CD4-positive, alpha-beta T cell (primary cell): ENCODE measurements at regions of chr19 and their contacts with region 1.

Region 1: DNA sequence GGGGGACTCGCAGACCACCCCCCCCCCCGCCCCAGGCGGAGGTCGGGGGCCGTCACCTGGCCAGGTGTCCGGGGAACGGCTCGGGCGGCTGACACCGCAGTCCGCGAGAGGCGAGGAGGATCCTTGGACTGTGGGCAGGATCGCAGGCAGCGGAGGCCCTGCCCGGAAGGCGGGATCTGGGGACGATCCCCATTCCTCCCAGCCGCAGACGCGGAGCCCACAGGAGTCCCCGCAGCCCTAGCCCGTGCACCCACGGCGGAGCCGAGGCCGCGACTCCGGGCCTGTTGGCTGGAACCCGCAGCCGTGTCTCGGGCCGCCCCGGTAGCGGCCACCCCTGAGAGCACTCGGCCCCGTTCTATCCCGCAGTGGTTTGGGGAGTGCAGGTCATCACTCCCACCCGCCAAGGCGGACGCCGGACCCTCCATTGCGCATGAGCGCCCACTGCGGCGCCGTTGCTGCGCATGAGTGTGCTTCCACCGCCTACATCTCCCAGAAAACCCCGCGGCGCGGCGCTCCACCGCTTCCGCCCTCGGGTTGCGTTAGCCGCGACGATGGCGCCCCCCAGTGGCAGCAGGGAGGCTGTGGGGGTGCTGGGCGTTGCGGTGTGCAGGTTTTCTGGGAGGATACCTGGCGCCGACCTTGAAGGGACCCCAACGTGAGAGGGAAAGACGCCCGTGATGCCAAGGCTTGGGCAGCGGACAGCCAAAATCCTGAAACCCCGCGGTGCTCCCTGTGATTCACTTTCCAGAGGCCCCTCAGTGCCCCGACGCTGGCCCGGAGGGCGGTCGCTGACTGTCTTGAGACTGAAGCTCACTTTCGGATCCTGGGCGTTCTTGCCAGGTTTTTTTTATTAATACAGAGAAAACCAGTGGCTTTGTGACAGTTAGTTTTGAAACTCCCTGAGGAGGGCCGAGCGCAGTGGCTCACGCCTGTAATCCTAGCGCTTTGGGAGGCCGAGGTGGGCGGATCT is 4.4 kb upstream of the ZNF329 start:
- DNase-seq: peak; percentile 93 to 100 (median 97)
- ATAC-seq: peak; percentile 91
- H3K4me3 ChIP-seq: peak overlapping the region; percentile 76
- H3K4me3 Mint-ChIP-seq: peak overlapping the region; percentile 93
- H3K27ac ChIP-seq: peak overlapping the region; percentile 52 to 62
- H3K27ac Mint-ChIP-seq: peak overlapping the region; percentile 78
- H3K4me1 ChIP-seq: peaks cover 31% of the 10 kb centered on the region
- H3K4me1 Mint-ChIP-seq: peaks cover 23% of the 10 kb centered on the region
- H3K27me3 ChIP-seq: no peaks in the 10 kb centered on the region
- H3K27me3 Mint-ChIP-seq: no peaks in the 10 kb centered on the region
- CTCF ChIP-seq: peak; percentile 97

Region 2: GRCh38 chr19:56314562-56315077 is 1840.3 kb before region 1 on chr19 and contains the start of gene ZSCAN5A:
- CTCF ChIA-PET with region 1: no interaction called
- POLR2A ChIA-PET with region 1: no interaction called
- intact Hi-C with region 1: loop called in 1 of 2 experiments (anchors 10 kb)
- DNase-seq: peak; percentile 93 to 99 (median 96)
- ATAC-seq: peak; percentile 76
- H3K4me3 ChIP-seq: peak within 1 kb of the TSS; percentile 76
- H3K4me3 Mint-ChIP-seq: peak within 1 kb of the TSS; percentile 91
- H3K27ac ChIP-seq: peak within 1 kb of the TSS; percentile 93 to 99
- H3K27ac Mint-ChIP-seq: peak within 1 kb of the TSS; percentile 95
- H3K4me1 ChIP-seq: peaks cover 14% of the 10 kb centered on the region
- H3K4me1 Mint-ChIP-seq: peaks cover 34% of the 10 kb centered on the region
- H3K27me3 ChIP-seq: no peaks in the 10 kb centered on the region
- H3K27me3 Mint-ChIP-seq: no peaks in the 10 kb centered on the region
- CTCF ChIP-seq: no peak
- total RNA-seq, gene ZSCAN5A: 3.3 to 4.4 TPM

Region 3: DNA sequence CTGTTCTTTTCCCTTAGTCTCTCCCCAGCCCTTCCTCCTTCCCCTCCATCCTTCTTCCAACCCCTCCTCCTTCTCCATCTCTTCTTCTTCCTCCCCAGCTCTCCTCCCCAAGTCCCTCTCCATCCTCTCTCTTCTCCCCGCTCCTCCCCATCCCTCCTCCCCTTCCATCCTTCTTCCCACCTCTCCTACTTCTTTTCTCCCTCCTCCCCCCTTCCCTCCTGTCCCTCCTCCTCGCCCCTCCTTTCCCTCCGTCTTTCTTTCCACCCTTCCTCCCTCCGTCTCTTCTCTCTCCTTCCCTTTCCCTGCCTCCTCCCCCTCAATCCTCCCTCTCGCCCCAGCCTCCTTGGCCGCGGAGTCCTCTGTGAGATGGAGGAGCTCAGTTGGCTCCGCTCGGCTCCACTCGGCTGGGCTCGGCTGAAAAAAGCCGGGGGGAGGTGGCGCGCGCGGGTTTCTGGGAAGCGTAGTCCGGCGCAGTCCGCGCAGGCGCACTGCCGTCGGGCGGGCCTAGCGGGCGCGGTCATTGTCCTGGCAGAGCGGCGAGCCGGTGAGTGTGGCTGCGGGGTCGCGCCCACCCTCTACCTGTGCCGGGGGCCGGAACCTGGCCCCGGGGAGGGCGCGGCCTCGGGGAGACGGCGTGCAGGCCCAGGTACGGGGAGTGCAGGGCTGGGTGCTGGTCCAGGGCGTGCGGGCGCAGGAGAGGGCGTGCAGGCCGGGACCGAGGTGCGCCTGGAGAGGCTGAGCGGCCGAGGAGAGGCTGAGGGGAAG is 1560.0 kb before region 1 on chr19 and contains the start of gene ZNF71:
- CTCF ChIA-PET with region 1: no interaction called
- POLR2A ChIA-PET with region 1: no interaction called
- intact Hi-C with region 1: loop called in 1 of 2 experiments (anchors 10 kb)
- DNase-seq: peak; percentile 79 to 90 (median 84)
- ATAC-seq: peak; percentile 95
- H3K4me3 ChIP-seq: peak within 1 kb of the TSS; percentile 73
- H3K4me3 Mint-ChIP-seq: peak within 1 kb of the TSS; percentile 92
- H3K27ac ChIP-seq: peak within 1 kb of the TSS; percentile 43 to 62
- H3K27ac Mint-ChIP-seq: peak within 1 kb of the TSS; percentile 79
- H3K4me1 ChIP-seq: peaks cover 19% of the 10 kb centered on the region
- H3K4me1 Mint-ChIP-seq: peaks cover 24% of the 10 kb centered on the region
- H3K27me3 ChIP-seq: no peaks in the 10 kb centered on the region
- H3K27me3 Mint-ChIP-seq: no peaks in the 10 kb centered on the region
- CTCF ChIP-seq: no peak
- total RNA-seq, gene ZNF71: 2.2 TPM

Region 4: GRCh38 chr19:57410877-57411671 is 743.9 kb before region 1 on chr19 and contains the start of gene ZNF17:
- CTCF ChIA-PET with region 1: no interaction called
- POLR2A ChIA-PET with region 1: no interaction called
- intact Hi-C with region 1: loop called (anchors 1 kb)
- DNase-seq: peak; percentile 81 to 96 (median 90)
- ATAC-seq: peak; percentile 99
- H3K4me3 ChIP-seq: peak within 1 kb of the TSS; percentile 79
- H3K4me3 Mint-ChIP-seq: peak within 1 kb of the TSS; percentile 97
- H3K27ac ChIP-seq: peak within 1 kb of the TSS; percentile 58 to 68
- H3K27ac Mint-ChIP-seq: peak within 1 kb of the TSS; percentile 91
- H3K4me1 ChIP-seq: peaks cover 20% of the 10 kb centered on the region
- H3K4me1 Mint-ChIP-seq: peaks cover 39% of the 10 kb centered on the region
- H3K27me3 ChIP-seq: no peaks in the 10 kb centered on the region
- H3K27me3 Mint-ChIP-seq: no peaks in the 10 kb centered on the region
- CTCF ChIP-seq: no peak
- total RNA-seq, gene ZNF17: 9.3 to 10.0 TPM

Region 5: GRCh38 chr19:57632987-57633831 is 521.8 kb before region 1 on chr19 and contains the start of gene ZNF211:
- CTCF ChIA-PET with region 1: no interaction called
- POLR2A ChIA-PET with region 1: no interaction called
- intact Hi-C with region 1: loop called in 1 of 2 experiments (anchors 5 kb)
- DNase-seq: peak; percentile 73 to 95 (median 84)
- ATAC-seq: peak; percentile 99
- H3K4me3 ChIP-seq: peak within 1 kb of the TSS; percentile 87
- H3K4me3 Mint-ChIP-seq: peak within 1 kb of the TSS; percentile 98
- H3K27ac ChIP-seq: peak within 1 kb of the TSS; percentile 69 to 72
- H3K27ac Mint-ChIP-seq: peak within 1 kb of the TSS; percentile 76
- H3K4me1 ChIP-seq: peaks cover 19% of the 10 kb centered on the region
- H3K4me1 Mint-ChIP-seq: peaks cover 31% of the 10 kb centered on the region
- H3K27me3 ChIP-seq: no peaks in the 10 kb centered on the region
- H3K27me3 Mint-ChIP-seq: no peaks in the 10 kb centered on the region
- CTCF ChIP-seq: no peak
- total RNA-seq, gene ZNF211: 29.3 to 30.5 TPM

Region 6: DNA sequence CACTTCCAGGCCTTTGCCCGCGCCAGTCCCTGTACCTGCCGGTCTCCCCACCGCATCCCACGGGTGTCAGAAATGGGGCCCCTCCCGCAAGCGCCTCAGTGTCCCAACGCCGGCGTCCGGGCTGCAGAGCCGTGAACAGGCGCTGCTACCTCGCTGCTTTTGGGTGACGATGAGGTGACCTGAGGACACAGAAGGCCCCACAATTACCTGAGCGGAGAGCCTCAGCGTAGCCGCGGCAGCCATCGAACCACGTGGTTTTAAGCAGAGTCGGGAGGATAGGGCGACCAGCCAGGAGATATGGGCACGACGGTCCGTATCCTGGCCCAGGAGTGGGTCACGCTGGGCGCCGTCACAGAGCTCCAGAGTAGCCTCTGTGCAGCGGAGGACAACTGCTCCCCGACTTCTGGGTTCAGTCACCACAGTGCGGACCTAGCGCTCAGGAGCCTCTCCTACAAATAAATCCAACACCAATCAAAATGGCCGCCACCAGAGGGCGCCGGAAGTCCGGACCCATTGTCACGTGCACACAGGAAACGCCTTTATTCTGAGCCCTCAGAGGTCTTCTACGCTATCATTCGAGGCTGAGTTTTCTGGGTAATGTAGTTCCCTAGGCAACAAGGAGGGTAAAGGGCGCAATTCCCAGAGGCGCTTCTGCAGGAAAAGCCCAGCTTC is 266.3 kb before region 1 on chr19 and contains the start of gene ZNF814:
- CTCF ChIA-PET with region 1: no interaction called
- POLR2A ChIA-PET with region 1: interaction called, 3 read pairs
- intact Hi-C with region 1: loop called in 1 of 2 experiments (anchors 10 kb)
- DNase-seq: peak; percentile 58 to 88 (median 79)
- ATAC-seq: peak; percentile 92
- H3K4me3 ChIP-seq: peak within 1 kb of the TSS; percentile 91
- H3K4me3 Mint-ChIP-seq: peak within 1 kb of the TSS; percentile 90
- H3K27ac ChIP-seq: peak within 1 kb of the TSS; percentile 52 to 61
- H3K27ac Mint-ChIP-seq: peak within 1 kb of the TSS; percentile 81
- H3K4me1 ChIP-seq: peaks cover 24% of the 10 kb centered on the region
- H3K4me1 Mint-ChIP-seq: peaks cover 28% of the 10 kb centered on the region
- H3K27me3 ChIP-seq: no peaks in the 10 kb centered on the region
- H3K27me3 Mint-ChIP-seq: no peaks in the 10 kb centered on the region
- CTCF ChIP-seq: peak; percentile 19
- total RNA-seq, gene ZNF814: 29.0 to 34.7 TPM

Region 7: GRCh38 chr19:58021541-58022282 is 133.3 kb before region 1 on chr19:
- CTCF ChIA-PET with region 1: no interaction called
- POLR2A ChIA-PET with region 1: interaction called, 3 read pairs
- intact Hi-C with region 1: loop called (anchors 1 to 2 kb)
- DNase-seq: peak in 8 of 14 experiments; percentile 7 to 69 (median 38)
- ATAC-seq: peak; percentile 95
- H3K4me3 ChIP-seq: no peak overlapping the region
- H3K4me3 Mint-ChIP-seq: no peak overlapping the region
- H3K27ac ChIP-seq: no peak overlapping the region
- H3K27ac Mint-ChIP-seq: no peak overlapping the region
- H3K4me1 ChIP-seq: no peaks in the 10 kb centered on the region
- H3K4me1 Mint-ChIP-seq: no peaks in the 10 kb centered on the region
- H3K27me3 ChIP-seq: peaks cover 0 to 2% of the 10 kb centered on the region in 2 experiments
- H3K27me3 Mint-ChIP-seq: peaks cover 5% of the 10 kb centered on the region
- CTCF ChIP-seq: no peak

Region 8: DNA sequence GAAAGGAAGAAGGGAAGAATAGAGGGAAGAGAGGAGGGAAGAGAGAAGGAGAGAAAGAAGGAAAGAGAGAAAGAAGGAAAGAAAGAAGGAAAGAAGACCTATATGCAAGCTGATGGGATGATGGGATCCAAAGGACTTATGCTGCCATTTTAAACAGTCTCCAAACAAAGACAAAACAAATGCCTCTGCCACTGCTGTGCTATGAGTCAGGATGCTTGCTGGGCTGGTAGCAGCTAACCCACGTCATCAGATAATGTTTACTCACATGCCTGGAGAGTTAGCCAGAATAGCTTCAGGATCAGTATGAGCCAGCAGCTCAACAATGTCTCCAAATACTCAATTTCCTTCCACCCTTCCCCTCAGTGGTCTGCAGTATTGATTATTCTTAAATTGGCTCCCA is 15.9 kb after region 1 on chr19:
- CTCF ChIA-PET with region 1: no interaction called
- POLR2A ChIA-PET with region 1: no interaction called
- intact Hi-C with region 1: no loop called
- DNase-seq: no peak
- ATAC-seq: no peak
- H3K4me3 ChIP-seq: no peak overlapping the region
- H3K4me3 Mint-ChIP-seq: no peak overlapping the region
- H3K27ac ChIP-seq: no peak overlapping the region
- H3K27ac Mint-ChIP-seq: no peak overlapping the region
- H3K4me1 ChIP-seq: no peaks in the 10 kb centered on the region
- H3K4me1 Mint-ChIP-seq: no peaks in the 10 kb centered on the region
- H3K27me3 ChIP-seq: no peaks in the 10 kb centered on the region
- H3K27me3 Mint-ChIP-seq: no peaks in the 10 kb centered on the region
- CTCF ChIP-seq: no peak

Region 9: GRCh38 chr19:58218899-58219298 is 63.9 kb after region 1 on chr19:
- CTCF ChIA-PET with region 1: no interaction called
- POLR2A ChIA-PET with region 1: no interaction called
- intact Hi-C with region 1: no loop called
- DNase-seq: peak in 7 of 14 experiments; percentile 15 to 61 (median 37)
- ATAC-seq: no peak
- H3K4me3 ChIP-seq: no peak overlapping the region
- H3K4me3 Mint-ChIP-seq: no peak overlapping the region
- H3K27ac ChIP-seq: no peak overlapping the region
- H3K27ac Mint-ChIP-seq: no peak overlapping the region
- H3K4me1 ChIP-seq: no peaks in the 10 kb centered on the region
- H3K4me1 Mint-ChIP-seq: no peaks in the 10 kb centered on the region
- H3K27me3 ChIP-seq: peaks cover 0 to 5% of the 10 kb centered on the region in 2 experiments
- H3K27me3 Mint-ChIP-seq: no peaks in the 10 kb centered on the region
- CTCF ChIP-seq: no peak

Region 10: DNA sequence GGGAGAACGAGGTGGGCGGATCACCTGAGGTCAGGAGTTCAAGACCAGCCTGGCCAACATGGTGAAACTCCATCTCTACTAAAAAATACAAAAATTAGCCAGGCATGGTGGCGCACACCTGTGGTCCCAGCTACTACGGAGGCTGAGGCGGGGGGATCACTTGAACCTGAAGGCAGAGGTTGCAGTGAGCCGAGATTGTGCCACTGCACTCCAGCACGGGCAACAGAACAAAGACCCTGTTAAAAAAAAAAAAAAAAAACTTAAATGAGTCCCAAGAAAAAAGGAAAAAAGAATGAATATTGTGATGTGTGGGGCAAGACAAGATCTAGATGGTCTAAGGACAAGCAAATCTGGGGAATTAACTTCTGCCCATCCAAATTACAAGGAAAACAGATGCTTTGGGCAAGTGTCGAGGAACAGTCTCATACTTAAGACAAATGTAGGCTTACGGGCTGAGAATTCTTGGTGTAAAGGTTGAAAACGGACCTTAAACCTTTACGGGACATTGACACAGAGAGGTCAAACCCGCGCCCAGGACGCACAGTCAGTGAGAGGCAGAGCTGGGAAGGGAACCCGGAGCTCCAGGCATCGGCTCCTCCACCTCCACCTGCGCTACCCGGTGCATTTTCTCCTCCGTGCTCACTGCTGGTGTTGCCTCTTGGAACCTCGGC is 311.3 kb after region 1 on chr19:
- CTCF ChIA-PET with region 1: no interaction called
- POLR2A ChIA-PET with region 1: no interaction called
- intact Hi-C with region 1: no loop called
- DNase-seq: no peak
- ATAC-seq: peak; percentile 14
- H3K4me3 ChIP-seq: peak overlapping the region; percentile 68
- H3K4me3 Mint-ChIP-seq: peak overlapping the region; percentile 93
- H3K27ac ChIP-seq: no peak overlapping the region
- H3K27ac Mint-ChIP-seq: peak overlapping the region; percentile 83
- H3K4me1 ChIP-seq: peaks cover 20% of the 10 kb centered on the region
- H3K4me1 Mint-ChIP-seq: peaks cover 22% of the 10 kb centered on the region
- H3K27me3 ChIP-seq: no peaks in the 10 kb centered on the region
- H3K27me3 Mint-ChIP-seq: no peaks in the 10 kb centered on the region
- CTCF ChIP-seq: no peak